Natural killer cell (primary cell): ENCODE measurements at regions of chr11 and their contacts with region 1.

Region 1: DNA sequence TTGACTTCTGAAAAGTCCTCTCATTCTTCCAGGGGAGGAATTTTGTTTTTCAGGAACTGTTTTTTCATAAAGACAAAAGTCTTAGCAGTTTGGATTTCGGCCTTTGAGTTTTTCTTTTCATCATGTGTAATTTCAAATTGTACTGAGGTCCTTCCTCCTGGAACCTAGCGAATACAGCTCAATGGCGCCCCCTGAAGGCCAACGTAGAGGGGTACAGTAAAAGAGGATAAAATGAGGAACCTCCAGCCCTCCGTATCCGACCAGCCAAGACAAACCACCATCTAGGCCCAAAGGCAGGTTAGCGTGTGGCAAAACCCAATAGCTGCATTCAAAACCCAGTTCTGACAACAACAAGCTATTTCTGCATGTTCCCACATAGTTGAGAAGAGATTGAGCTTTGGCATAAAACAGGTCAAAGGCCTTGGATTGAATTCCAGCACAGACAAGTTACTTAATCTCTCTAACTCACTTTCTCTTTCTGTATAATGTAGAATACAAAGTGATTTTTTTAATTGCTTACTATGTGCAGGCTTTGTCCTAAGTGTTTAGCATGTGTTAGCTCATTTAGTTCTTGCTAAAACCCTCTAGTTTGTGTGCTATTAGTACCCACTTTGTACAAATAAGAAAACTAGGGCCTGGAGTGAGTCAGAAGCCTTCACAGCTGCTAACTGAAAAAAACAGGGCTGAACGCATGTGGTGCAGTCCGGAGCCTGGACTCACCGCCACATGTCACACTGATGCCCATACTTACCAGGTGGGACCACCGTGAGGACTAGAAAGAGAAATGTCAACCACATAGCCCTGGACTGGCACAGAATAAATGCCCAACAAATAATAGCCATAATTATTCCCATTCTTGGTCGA is 43.2 kb upstream of the ETS1 start:
- DNase-seq: peak; percentile 90 to 97
- ATAC-seq: peak; percentile 66 to 88 (median 68)
- H3K4me3 ChIP-seq: no peak overlapping the region
- H3K4me3 Mint-ChIP-seq: peak overlapping the region; percentile 59
- H3K27ac ChIP-seq: peak overlapping the region; percentile 59
- H3K27ac Mint-ChIP-seq: peak overlapping the region; percentile 93 to 97
- H3K4me1 ChIP-seq: peaks cover 55% of the 10 kb centered on the region
- H3K4me1 Mint-ChIP-seq: peaks cover 55 to 67% of the 10 kb centered on the region in 2 donors
- H3K27me3 ChIP-seq: no peaks in the 10 kb centered on the region
- H3K27me3 Mint-ChIP-seq: no peaks in the 10 kb centered on the region
- CTCF ChIP-seq: peak; percentile 86

Region 2: DNA sequence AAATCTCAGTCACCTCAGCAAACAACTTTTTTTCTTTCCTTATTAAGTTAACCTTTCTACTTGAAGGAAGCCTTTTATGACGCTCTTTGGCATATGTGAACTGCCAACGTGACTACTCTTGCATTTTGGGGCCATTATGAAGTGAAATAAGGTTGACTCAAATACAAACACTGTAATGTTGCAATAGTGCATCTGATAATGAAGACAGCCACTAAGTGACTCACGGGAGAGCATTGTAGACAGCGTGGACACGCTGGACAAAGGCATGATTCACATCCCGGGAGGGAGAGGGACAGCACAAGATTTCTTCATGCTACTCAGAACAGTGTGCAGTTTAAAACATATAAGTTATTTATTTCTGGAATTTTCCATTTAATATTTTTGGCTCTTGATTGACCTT is 604.0 kb before region 1 on chr11:
- intact Hi-C with region 1: loop called (anchors 2 kb)
- DNase-seq: no peak
- ATAC-seq: no peak
- H3K4me3 ChIP-seq: no peak overlapping the region
- H3K4me3 Mint-ChIP-seq: no peak overlapping the region
- H3K27ac ChIP-seq: no peak overlapping the region
- H3K27ac Mint-ChIP-seq: no peak overlapping the region
- H3K4me1 ChIP-seq: peaks cover under 1% of the 10 kb centered on the region
- H3K4me1 Mint-ChIP-seq: no peaks in the 10 kb centered on the region
- H3K27me3 ChIP-seq: no peaks in the 10 kb centered on the region
- H3K27me3 Mint-ChIP-seq: peaks cover 19 to 25% of the 10 kb centered on the region in 2 donors
- CTCF ChIP-seq: no peak

Region 3: GRCh38 chr11:128195057-128195751 is 435.4 kb before region 1 on chr11:
- intact Hi-C with region 1: loop called (anchors 1 kb)
- DNase-seq: peak in 1 of 2 donors; percentile 83
- ATAC-seq: peak; percentile 60 to 70 (median 61)
- H3K4me3 ChIP-seq: no peak overlapping the region
- H3K4me3 Mint-ChIP-seq: peak overlapping the region; percentile 67
- H3K27ac ChIP-seq: no peak overlapping the region
- H3K27ac Mint-ChIP-seq: peak overlapping the region; percentile 74 to 76
- H3K4me1 ChIP-seq: peaks cover 33% of the 10 kb centered on the region
- H3K4me1 Mint-ChIP-seq: peaks cover 67 to 75% of the 10 kb centered on the region in 2 donors
- H3K27me3 ChIP-seq: no peaks in the 10 kb centered on the region
- H3K27me3 Mint-ChIP-seq: no peaks in the 10 kb centered on the region
- CTCF ChIP-seq: no peak

Region 4: GRCh38 chr11:128472128-128473089 is 158.2 kb before region 1 on chr11:
- intact Hi-C with region 1: loop called (anchors 2 kb)
- DNase-seq: peak in 1 of 2 donors; percentile 75
- ATAC-seq: peak; percentile 14 to 53 (median 46)
- H3K4me3 ChIP-seq: no peak overlapping the region
- H3K4me3 Mint-ChIP-seq: peak overlapping the region; percentile 86
- H3K27ac ChIP-seq: peak overlapping the region; percentile 92
- H3K27ac Mint-ChIP-seq: peak overlapping the region; percentile 98 to 99
- H3K4me1 ChIP-seq: peaks cover 81% of the 10 kb centered on the region
- H3K4me1 Mint-ChIP-seq: peaks cover 99% of the 10 kb centered on the region in 2 donors
- H3K27me3 ChIP-seq: no peaks in the 10 kb centered on the region
- H3K27me3 Mint-ChIP-seq: no peaks in the 10 kb centered on the region
- CTCF ChIP-seq: no peak

Region 5: DNA sequence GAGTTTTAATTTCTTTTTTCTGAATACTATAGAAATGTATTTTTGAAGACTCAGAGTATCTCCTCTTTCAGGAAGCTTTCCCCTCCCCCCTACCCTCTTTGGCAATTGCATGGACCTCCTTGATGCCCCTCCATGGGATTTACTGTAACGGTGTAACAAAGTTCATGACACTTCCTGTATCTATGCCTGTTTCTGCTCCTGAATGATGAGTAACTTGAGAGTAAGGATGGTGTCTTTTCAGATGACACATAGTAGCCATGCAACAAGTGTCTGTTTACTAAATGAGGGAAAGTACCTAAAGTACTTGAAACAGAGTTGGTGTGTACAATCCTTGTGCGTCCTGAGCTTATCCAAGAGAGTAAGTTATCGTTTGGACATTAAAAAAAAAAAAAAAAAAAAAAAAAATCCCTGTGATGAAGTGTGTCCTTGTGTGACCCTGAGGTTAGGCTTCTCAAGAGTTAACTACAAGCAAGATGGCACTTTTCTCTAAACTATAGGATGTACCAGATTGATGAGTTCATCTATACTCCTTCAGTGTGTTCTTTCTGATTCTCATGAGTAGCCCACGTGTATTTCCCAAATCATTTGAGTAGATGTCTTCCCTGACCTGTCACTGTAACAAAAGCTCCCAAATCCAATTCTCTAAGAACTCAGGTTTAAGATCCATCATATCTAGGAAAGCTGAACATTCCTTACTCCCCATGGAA is 50.6 kb before region 1 on chr11:
- intact Hi-C with region 1: no loop called
- DNase-seq: peak in 1 of 2 donors; percentile 33
- ATAC-seq: peak; percentile 29 to 57 (median 39)
- H3K4me3 ChIP-seq: no peak overlapping the region
- H3K4me3 Mint-ChIP-seq: no peak overlapping the region
- H3K27ac ChIP-seq: no peak overlapping the region
- H3K27ac Mint-ChIP-seq: no peak overlapping the region
- H3K4me1 ChIP-seq: peaks cover 3% of the 10 kb centered on the region
- H3K4me1 Mint-ChIP-seq: peaks cover 6 to 15% of the 10 kb centered on the region in 2 donors
- H3K27me3 ChIP-seq: no peaks in the 10 kb centered on the region
- H3K27me3 Mint-ChIP-seq: peaks cover 12 to 35% of the 10 kb centered on the region in 2 donors
- CTCF ChIP-seq: no peak

Region 6: GRCh38 chr11:128757235-128757711 is 126.7 kb after region 1 on chr11:
- intact Hi-C with region 1: loop called (anchors 1 kb)
- DNase-seq: peak; percentile 64 to 89
- ATAC-seq: peak; percentile 90 to 93 (median 92)
- H3K4me3 ChIP-seq: no peak overlapping the region
- H3K4me3 Mint-ChIP-seq: peak overlapping the region; percentile 72
- H3K27ac ChIP-seq: peak overlapping the region; percentile 24
- H3K27ac Mint-ChIP-seq: peak overlapping the region; percentile 88 to 93
- H3K4me1 ChIP-seq: peaks cover 60% of the 10 kb centered on the region
- H3K4me1 Mint-ChIP-seq: peaks cover 81 to 88% of the 10 kb centered on the region in 2 donors
- H3K27me3 ChIP-seq: no peaks in the 10 kb centered on the region
- H3K27me3 Mint-ChIP-seq: no peaks in the 10 kb centered on the region
- CTCF ChIP-seq: peak; percentile 73